ENCODE measurements at regions of chr3 and their contacts with region 1.

Region 1: GRCh38 chr3:17742108-17742879 is at the start of gene TBC1D5:
- DNase-seq: peak; percentile 77 to 91 (median 84)
- ATAC-seq: peak; percentile 95
- H3K4me3 ChIP-seq: peak within 1 kb of the TSS; percentile 72
- H3K4me3 Mint-ChIP-seq: peak within 1 kb of the TSS; percentile 79 to 96 (median 92)
- H3K27ac ChIP-seq: peak within 1 kb of the TSS; percentile 71
- H3K27ac Mint-ChIP-seq: peak within 1 kb of the TSS; percentile 74 to 96 (median 88)
- H3K4me1 ChIP-seq: peaks cover 6 to 8% of the 10 kb centered on the region in 2 donors
- H3K4me1 Mint-ChIP-seq: peaks cover 17 to 49% (median 39%) of the 10 kb centered on the region in 7 donors
- H3K27me3 ChIP-seq: no peaks in the 10 kb centered on the region
- H3K27me3 Mint-ChIP-seq: no peaks in the 10 kb centered on the region
- total RNA-seq, gene TBC1D5: 30.5 to 54.0 (median 40.3) TPM

Region 2: DNA sequence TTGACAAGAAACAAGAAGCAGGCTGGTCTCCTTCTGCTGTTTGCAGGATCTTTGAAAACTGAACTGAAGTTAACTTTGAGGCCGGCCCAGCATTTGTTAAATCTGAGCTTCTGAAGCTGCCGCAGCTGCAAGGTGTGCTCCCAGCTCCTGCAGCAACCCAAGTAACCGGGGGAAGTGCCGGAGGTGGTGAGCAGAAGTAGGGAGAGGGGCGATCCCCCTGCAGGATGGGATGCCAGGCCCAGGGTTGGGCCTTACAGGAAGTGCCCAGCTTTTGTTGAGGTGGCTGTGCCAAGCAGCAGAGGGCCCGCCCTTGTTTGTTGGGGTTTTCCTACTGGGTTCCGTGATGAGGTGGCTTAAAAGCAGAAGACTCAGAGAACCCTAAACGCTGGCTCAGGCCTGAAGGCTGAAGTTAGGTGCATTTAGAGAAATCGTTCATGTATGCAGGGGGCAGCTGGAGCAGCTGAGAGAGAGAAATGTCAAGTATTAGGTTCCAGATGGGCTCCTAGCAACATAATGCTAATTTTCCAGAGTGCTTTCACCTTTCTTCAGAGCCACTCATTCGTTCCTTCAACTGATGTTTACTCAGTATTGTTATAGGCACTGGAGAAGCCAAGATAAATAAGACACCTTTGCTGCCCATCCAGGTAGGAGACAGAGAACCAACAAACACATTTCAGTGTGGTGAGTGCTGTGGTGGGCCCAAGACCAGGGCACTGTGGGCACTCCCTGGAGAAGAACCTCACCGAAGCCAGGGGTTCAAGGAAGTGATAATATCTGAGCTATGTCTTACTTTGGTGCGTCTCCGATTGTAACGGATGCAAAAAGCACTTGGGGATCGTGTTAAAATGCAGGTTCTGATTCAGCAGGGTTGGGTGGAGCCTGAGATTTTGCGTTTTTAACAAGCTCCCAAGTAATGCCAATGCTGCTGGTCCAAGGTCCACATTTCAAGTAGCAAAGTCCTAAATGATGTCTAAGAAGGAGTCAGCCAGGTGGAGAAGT is 899.7 kb before region 1 on chr3:
- CTCF ChIA-PET with region 1: no interaction called
- POLR2A ChIA-PET with region 1: no interaction called
- intact Hi-C with region 1: loop called in 1 of 2 experiments (anchors 5 kb)
- DNase-seq: peak; percentile 49 to 85 (median 78)
- ATAC-seq: peak; percentile 95
- H3K4me3 ChIP-seq: peak overlapping the region; percentile 61
- H3K4me3 Mint-ChIP-seq: peak overlapping the region; percentile 78 to 93 (median 87)
- H3K27ac ChIP-seq: peak overlapping the region; percentile 76
- H3K27ac Mint-ChIP-seq: peak overlapping the region; percentile 92 to 99 (median 98)
- H3K4me1 ChIP-seq: peaks cover 49 to 51% of the 10 kb centered on the region in 2 donors
- H3K4me1 Mint-ChIP-seq: peaks cover 34 to 96% (median 90%) of the 10 kb centered on the region in 7 donors
- H3K27me3 ChIP-seq: no peaks in the 10 kb centered on the region
- H3K27me3 Mint-ChIP-seq: peaks cover 0 to 6% (median 0%) of the 10 kb centered on the region in 5 donors

Region 3: DNA sequence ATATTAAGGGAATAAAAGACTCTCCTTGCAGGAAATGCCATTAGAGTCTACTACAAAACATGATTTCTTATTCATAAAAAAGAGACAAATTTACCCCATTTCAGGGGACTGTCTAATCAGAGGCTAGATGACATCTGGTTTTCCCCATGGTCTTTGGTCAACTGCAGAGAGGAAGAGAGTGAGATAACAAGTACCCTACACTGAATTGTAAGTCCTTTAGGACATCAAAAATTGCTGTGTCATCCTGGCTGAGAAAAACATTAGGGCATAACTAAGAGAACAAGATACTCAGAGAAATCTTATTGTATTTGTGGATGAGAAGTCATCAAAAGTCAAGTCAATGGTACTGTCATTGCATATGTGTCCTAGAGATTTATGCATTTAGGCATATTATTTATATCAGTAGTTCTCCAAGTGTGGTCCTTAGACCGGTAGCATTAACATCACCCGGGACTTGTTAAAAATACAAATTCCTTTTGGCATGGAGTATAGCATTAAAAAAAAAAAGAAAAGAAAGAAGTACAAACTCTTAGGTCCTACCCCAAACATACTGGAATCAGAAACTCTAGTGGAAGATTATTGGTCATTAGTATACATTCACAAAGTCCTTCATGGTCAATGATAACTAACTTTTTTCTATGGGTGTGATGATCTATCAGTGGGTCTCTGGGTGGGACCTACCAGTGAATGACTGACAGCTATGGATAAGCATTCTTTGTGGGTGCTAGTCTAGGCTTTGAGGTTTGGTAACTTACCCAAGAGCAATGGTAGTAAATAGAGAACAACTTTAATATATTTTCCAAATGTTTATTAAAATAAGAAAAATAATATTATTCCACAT is 29.1 kb after region 1 on chr3:
- CTCF ChIA-PET with region 1: interaction called, 3 read pairs
- POLR2A ChIA-PET with region 1: interaction called, 4 read pairs
- intact Hi-C with region 1: loop called in 1 of 2 experiments (anchors 1 kb)
- DNase-seq: no peak
- ATAC-seq: no peak
- H3K4me3 ChIP-seq: no peak overlapping the region
- H3K4me3 Mint-ChIP-seq: no peak overlapping the region
- H3K27ac ChIP-seq: no peak overlapping the region
- H3K27ac Mint-ChIP-seq: no peak overlapping the region
- H3K4me1 ChIP-seq: peaks cover 0 to 5% of the 10 kb centered on the region in 2 donors
- H3K4me1 Mint-ChIP-seq: peaks cover 8 to 25% (median 15%) of the 10 kb centered on the region in 7 donors
- H3K27me3 ChIP-seq: peaks cover 0 to 3% of the 10 kb centered on the region in 2 donors
- H3K27me3 Mint-ChIP-seq: peaks cover 7 to 25% (median 11%) of the 10 kb centered on the region in 5 donors

Region 4: GRCh38 chr3:17874632-17875031 is 132.3 kb after region 1 on chr3:
- CTCF ChIA-PET with region 1: no interaction called
- POLR2A ChIA-PET with region 1: no interaction called
- intact Hi-C with region 1: no loop called
- DNase-seq: no peak
- ATAC-seq: peak; percentile 20
- H3K4me3 ChIP-seq: no peak overlapping the region
- H3K4me3 Mint-ChIP-seq: no peak overlapping the region
- H3K27ac ChIP-seq: no peak overlapping the region
- H3K27ac Mint-ChIP-seq: no peak overlapping the region
- H3K4me1 ChIP-seq: no peaks in the 10 kb centered on the region
- H3K4me1 Mint-ChIP-seq: no peaks in the 10 kb centered on the region
- H3K27me3 ChIP-seq: no peaks in the 10 kb centered on the region
- H3K27me3 Mint-ChIP-seq: peaks cover 0 to 18% (median 5%) of the 10 kb centered on the region in 5 donors

Region 5: GRCh38 chr3:18424729-18425640 is 682.7 kb after region 1 on chr3 and contains the start of gene SATB1:
- CTCF ChIA-PET with region 1: no interaction called
- POLR2A ChIA-PET with region 1: no interaction called
- intact Hi-C with region 1: loop called in 1 of 2 experiments (anchors 10 kb)
- DNase-seq: peak; percentile 55 to 72 (median 67)
- ATAC-seq: peak; percentile 62
- H3K4me3 ChIP-seq: peak within 1 kb of the TSS; percentile 72
- H3K4me3 Mint-ChIP-seq: peak within 1 kb of the TSS; percentile 91 to 100 (median 98)
- H3K27ac ChIP-seq: peak within 1 kb of the TSS; percentile 97
- H3K27ac Mint-ChIP-seq: peak within 1 kb of the TSS; percentile 87 to 99 (median 98)
- H3K4me1 ChIP-seq: peaks cover 8 to 21% of the 10 kb centered on the region in 2 donors
- H3K4me1 Mint-ChIP-seq: peaks cover 41 to 72% (median 62%) of the 10 kb centered on the region in 7 donors
- H3K27me3 ChIP-seq: no peaks in the 10 kb centered on the region
- H3K27me3 Mint-ChIP-seq: peaks cover 0 to 2% (median 0%) of the 10 kb centered on the region in 5 donors
- total RNA-seq, gene SATB1: 258 to 482 (median 451) TPM